A549 (cell line): ENCODE measurements at regions of chr11 and their contacts with region 1.

Region 1: DNA sequence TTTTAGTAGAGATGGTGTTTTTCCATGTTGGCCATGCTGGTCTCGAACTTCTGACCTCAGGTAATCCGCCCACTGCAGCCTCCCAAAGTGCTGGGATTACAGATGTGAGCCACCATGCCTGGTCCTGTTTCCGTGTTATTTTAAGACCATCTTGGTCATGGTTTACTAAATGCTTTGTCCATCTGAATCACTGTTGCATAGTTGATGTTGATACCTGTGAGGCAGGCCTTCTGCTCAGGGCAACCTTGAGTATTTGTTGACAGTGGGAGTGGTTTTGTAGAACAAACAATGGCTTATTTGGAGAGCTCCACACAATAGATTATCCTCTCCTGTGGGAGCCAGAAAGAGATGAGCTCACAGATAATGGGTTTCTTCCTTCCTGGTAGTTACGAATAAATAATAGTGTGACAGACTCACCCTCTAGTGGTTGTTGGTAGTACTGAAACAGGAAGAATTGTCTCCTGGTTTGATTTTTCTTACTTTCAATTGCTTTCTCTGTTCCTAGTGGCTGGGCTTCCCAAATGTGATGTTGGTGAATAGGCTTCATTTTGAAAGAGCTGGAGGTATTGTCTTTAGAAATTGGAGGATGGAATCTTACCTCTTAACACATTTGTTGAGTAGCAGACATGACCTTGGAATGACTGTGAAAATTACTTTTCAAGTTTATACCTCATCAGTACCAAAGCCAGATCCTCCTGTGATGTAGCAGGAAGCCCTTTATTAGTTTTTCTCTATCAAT is 39.0 kb downstream of the CTNND1 start:
- DNase-seq: peak; percentile 88 to 95
- ATAC-seq: peak; percentile 96 to 97
- H3K4me3 ChIP-seq: no peak overlapping the region
- H3K27ac ChIP-seq: peak overlapping the region; percentile 49 to 61; a peak in 5 of 6 replicates
- H3K4me1 ChIP-seq: peaks cover 33% of the 10 kb centered on the region
- CTCF ChIP-seq: peak; percentile 93
- EP300 ChIP-seq: no peak
- POLR2A ChIP-seq: no peak
- RAD21 ChIP-seq: peak; percentile 92 to 94

Region 2: GRCh38 chr11:57751676-57752253 is 48.8 kb before region 1 on chr11 and contains the start of gene BTBD18:
- CTCF ChIA-PET with region 1: interaction called, 231 read pairs
- POLR2A ChIA-PET with region 1: interaction called, 6 read pairs
- DNase-seq: peak; percentile 57 to 76
- ATAC-seq: peak; percentile 96
- H3K4me3 ChIP-seq: no peak within 1 kb of the TSS
- H3K27ac ChIP-seq: peak within 1 kb of the TSS in 1 of 2 experiments; percentile 30; a peak in 1 of 6 replicates
- H3K4me1 ChIP-seq: peaks cover 4% of the 10 kb centered on the region; the same call in 1 of the 3 replicates
- CTCF ChIP-seq: peak; percentile 65
- EP300 ChIP-seq: no peak
- POLR2A ChIP-seq: no peak
- RAD21 ChIP-seq: peak; percentile 67 to 68
- polyA plus RNA-seq, gene BTBD18: not detected in 2 replicates

Region 3: DNA sequence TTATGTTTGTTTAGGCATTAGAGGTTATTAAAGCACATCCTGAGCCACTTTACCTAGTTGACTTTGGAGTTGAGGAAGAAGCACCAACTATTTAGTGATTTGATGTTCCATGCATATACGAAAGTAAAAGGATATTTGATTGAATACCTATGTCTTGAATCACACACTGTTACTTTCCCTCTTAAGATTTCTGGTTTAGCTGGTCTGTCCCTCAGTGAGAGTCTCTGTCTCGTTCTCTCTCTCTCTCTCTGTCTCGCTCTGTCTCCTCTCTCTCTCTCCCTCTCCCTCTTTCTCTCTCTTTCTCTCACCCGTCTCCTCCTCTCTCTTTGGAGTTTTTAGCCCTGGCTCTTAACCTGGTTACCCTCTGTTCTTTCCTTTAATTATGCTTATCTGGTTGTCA is 28.1 kb before region 1 on chr11:
- CTCF ChIA-PET with region 1: interaction called, 216 read pairs
- POLR2A ChIA-PET with region 1: interaction called, 9 read pairs
- DNase-seq: no peak
- ATAC-seq: peak in 1 of 2 experiments; percentile 32; a peak in 2 of 6 replicates
- H3K4me3 ChIP-seq: no peak overlapping the region
- H3K27ac ChIP-seq: peak overlapping the region in 1 of 2 experiments; percentile 33; a peak in 3 of 6 replicates
- H3K4me1 ChIP-seq: peaks cover 61% of the 10 kb centered on the region
- CTCF ChIP-seq: no peak
- EP300 ChIP-seq: no peak
- POLR2A ChIP-seq: no peak
- RAD21 ChIP-seq: no peak

Region 4: GRCh38 chr11:57785072-57785471 is 15.5 kb before region 1 on chr11:
- CTCF ChIA-PET with region 1: interaction called, 38 read pairs
- POLR2A ChIA-PET with region 1: no interaction called
- DNase-seq: no peak
- ATAC-seq: no peak
- H3K4me3 ChIP-seq: no peak overlapping the region
- H3K27ac ChIP-seq: no peak overlapping the region
- H3K4me1 ChIP-seq: peaks cover 75% of the 10 kb centered on the region
- CTCF ChIP-seq: no peak
- EP300 ChIP-seq: no peak
- POLR2A ChIP-seq: no peak
- RAD21 ChIP-seq: no peak

Region 5: GRCh38 chr11:57823859-57824258 is 23.2 kb after region 1 on chr11:
- CTCF ChIA-PET with region 1: interaction called, 13 read pairs
- POLR2A ChIA-PET with region 1: no interaction called
- DNase-seq: no peak
- ATAC-seq: peak in 1 of 2 experiments; percentile 32; a peak in 3 of 6 replicates
- H3K4me3 ChIP-seq: no peak overlapping the region
- H3K27ac ChIP-seq: no peak overlapping the region
- H3K4me1 ChIP-seq: no peaks in the 10 kb centered on the region
- CTCF ChIP-seq: no peak
- EP300 ChIP-seq: no peak
- POLR2A ChIP-seq: no peak
- RAD21 ChIP-seq: no peak

Region 6: DNA sequence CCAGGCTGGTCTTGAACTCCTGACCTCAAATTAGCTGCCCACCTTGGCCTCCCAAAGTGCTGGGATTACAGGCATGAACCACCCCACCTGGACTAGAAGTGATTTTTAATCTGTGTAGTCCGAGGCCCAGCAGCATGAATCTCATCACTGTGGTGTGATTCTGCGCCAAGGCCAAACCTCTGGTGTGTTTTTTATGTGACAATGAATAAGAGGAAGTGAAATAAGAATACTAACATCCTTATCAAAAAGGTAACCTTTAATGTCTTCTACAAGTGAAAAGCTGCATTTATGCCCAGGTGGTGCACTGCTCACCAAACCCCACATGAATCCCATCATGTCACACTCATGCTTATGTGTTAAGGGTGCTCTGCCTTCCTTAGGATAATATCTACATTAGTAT is 146.0 kb after region 1 on chr11:
- CTCF ChIA-PET with region 1: no interaction called
- POLR2A ChIA-PET with region 1: no interaction called
- DNase-seq: no peak
- ATAC-seq: no peak; a peak in 1 of 6 replicates
- H3K4me3 ChIP-seq: no peak overlapping the region
- H3K27ac ChIP-seq: no peak overlapping the region
- H3K4me1 ChIP-seq: no peaks in the 10 kb centered on the region
- CTCF ChIP-seq: no peak
- EP300 ChIP-seq: no peak
- POLR2A ChIP-seq: no peak
- RAD21 ChIP-seq: no peak